A549 (cell line): ENCODE measurements at regions of chr2 and their contacts with region 1.

Region 1: GRCh38 chr2:33380001-33380609 is 96.3 kb upstream of the RASGRP3 start:
- DNase-seq: peak in 1 of 2 experiments; percentile 36
- ATAC-seq: no peak
- H3K4me3 ChIP-seq: no peak overlapping the region
- H3K27ac ChIP-seq: no peak overlapping the region
- H3K4me1 ChIP-seq: peaks cover 6% of the 10 kb centered on the region; the same call in 1 of the 3 replicates
- CTCF ChIP-seq: peak; percentile 82
- EP300 ChIP-seq: no peak
- POLR2A ChIP-seq: no peak
- RAD21 ChIP-seq: peak; percentile 68 to 77; a peak in 4 of 5 replicates

Region 2: GRCh38 chr2:33344230-33344629 is 35.9 kb before region 1 on chr2:
- CTCF ChIA-PET with region 1: interaction called, 10 read pairs
- POLR2A ChIA-PET with region 1: no interaction called
- DNase-seq: no peak
- ATAC-seq: no peak
- H3K4me3 ChIP-seq: no peak overlapping the region
- H3K27ac ChIP-seq: no peak overlapping the region
- H3K4me1 ChIP-seq: 0 out of 3 replicates have a peak, but pooled peaks cover 3% of the 10 kb centered on the region
- CTCF ChIP-seq: no peak
- EP300 ChIP-seq: no peak
- POLR2A ChIP-seq: no peak
- RAD21 ChIP-seq: no peak

Region 3: DNA sequence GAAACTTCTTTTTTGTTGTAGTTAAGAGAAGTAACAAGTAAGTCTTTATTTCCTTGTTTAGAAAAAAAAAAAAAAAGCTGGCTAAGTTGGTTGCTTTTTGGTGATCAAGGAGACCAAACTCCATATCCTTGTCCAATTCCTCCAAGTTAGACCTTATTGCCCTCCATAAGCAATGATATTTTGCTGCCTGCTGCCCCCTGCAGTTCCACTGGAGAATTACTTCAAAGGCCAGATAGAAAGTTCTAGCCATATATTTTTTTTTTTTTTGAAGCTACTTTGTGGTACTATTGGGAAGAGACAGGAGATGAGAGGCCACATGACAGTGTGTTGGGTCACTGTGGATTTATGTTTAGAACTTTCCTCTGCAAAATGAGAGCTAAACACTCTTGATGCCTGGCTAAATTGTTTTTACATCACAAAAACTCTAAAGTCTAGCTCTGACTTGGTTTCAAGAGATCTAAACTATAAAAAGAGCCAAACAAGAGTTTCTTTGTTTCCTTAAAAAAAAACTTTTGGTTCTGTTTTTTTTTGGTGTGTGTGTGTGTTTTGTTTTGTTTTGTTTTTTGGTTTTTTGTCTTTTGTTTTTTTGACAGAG is 15.6 kb after region 1 on chr2:
- CTCF ChIA-PET with region 1: interaction called, 14 read pairs
- POLR2A ChIA-PET with region 1: no interaction called
- DNase-seq: peak; percentile 26 to 78
- ATAC-seq: peak; percentile 62 to 85; a peak in 3 of 6 replicates
- H3K4me3 ChIP-seq: no peak overlapping the region
- H3K27ac ChIP-seq: no peak overlapping the region
- H3K4me1 ChIP-seq: peaks cover 5% of the 10 kb centered on the region; the same call in 1 of the 3 replicates
- CTCF ChIP-seq: peak; percentile 62
- EP300 ChIP-seq: no peak
- POLR2A ChIP-seq: no peak
- RAD21 ChIP-seq: peak; percentile 71 to 80